Activated CD4-positive, alpha-beta T cell treated with anti-CD3 and anti-CD28 coated beads for 36 hours (primary cell): ENCODE measurements at regions of chr5 and their contacts with region 1.

Region 1: DNA sequence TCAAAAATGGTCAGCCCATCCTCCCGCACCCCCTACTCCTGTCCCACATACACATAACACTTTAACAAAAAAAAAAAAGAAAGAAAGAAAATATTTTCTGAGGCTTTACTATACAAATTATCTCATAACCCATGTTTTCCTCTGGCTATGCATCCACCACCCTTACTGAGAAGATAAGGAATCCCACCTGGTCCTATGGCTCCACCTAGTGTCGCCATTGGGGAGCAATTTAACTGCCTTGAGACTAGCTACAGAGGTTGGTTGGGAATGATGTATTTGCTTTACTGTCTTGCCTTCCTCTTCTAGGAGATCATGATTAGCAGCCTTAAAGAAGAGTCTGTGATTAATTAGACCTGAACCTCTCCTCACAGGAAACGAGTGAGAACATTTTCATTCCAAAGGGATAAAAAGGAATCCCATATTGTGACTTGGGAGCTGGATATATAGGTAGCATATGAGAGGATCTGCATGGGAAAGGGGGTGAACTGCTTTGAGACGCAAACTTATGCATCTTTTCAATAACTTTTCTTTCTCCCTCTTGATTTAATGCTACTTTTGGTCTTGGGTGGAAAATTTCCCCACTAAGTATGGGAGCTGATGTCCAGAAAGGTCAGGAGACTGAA is 77.7 kb upstream of the SELENOP start:
- DNase-seq: peak; percentile 82
- ATAC-seq: peak; percentile 84
- H3K4me3 Mint-ChIP-seq: no peak overlapping the region
- H3K27ac Mint-ChIP-seq: no peak overlapping the region
- H3K4me1 Mint-ChIP-seq: no peaks in the 10 kb centered on the region
- H3K27me3 Mint-ChIP-seq: peaks cover 3% of the 10 kb centered on the region

Region 2: DNA sequence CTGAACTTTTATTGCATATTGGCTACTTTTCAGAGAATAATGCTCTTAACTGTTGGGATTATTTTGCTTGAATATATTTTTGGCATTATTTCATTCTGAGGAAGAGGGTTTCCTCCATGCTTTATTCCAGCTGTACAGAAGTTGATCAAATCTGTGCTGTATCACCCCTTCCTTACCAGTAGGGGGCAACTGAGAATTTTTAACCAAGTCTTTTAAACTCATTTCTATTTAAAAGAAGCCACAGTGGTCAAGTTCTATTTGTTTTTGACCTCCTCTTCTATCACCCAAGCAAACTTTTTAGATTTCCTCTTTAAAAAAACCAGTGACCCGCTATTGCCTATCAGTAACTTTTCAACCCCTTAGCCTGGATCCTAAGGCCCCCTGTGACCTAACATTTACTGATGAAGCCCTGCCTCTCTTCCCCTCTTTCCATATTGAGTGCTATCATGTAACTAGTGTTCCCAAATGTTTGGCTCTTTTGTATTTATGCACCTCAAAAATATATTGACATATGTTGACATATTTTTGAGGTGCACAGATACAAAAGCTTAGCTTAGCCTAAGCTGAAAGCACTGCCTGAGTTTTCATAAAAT is 883.8 kb before region 1 on chr5:
- CTCF ChIA-PET with region 1: no interaction called
- POLR2A ChIA-PET with region 1: no interaction called
- intact Hi-C with region 1: loop called in 1 of 2 experiments (anchors 2 kb)
- DNase-seq: no peak
- ATAC-seq: no peak
- H3K4me3 Mint-ChIP-seq: no peak overlapping the region
- H3K27ac Mint-ChIP-seq: no peak overlapping the region
- H3K4me1 Mint-ChIP-seq: no peaks in the 10 kb centered on the region
- H3K27me3 Mint-ChIP-seq: peaks cover 3% of the 10 kb centered on the region

Region 3: DNA sequence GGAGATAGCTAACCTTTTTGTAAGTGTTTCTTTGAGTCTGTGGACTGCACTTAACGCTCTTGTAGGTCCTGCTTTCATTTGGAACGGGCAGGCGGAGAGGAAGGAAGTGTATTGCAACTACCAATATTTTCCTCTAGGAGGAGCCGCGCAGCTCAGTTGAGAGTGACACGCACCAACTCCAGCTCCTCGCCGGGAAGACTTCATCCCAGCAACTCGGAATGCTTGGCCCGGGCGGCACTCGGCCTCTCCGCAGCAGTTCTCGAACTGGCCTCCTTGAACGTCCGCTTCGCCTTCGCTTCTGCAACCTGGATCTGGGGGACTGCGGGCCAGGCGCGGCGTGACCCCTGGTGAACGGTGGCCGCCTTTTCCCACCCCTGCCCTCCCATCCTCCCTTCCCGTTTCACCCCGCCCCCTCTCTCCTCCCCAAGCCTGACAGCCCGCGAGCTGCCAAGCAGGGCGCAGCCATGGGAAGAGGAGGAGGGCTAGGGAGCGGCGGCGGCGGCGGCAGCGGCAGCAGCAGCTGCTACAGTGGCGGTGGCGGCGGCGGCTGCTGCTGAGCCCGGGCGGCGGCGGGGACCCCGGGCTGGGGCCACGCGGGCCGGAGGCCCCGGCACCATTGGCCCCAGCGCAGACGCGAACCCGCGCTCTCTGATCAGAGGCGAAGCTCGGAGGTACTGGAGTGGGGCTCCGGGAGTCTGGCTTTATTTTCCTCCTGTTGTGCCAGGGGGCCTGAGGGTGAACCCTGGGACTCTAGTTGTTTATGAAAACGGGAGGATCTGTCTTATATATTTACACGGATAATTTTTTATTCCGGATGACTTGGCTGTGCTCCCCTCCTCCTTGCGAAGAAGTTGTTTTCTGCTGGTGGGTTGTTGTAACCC is 465.9 kb before region 1 on chr5 and contains the start of gene GHR:
- CTCF ChIA-PET with region 1: no interaction called
- POLR2A ChIA-PET with region 1: no interaction called
- intact Hi-C with region 1: loop called (anchors 1 to 5 kb)
- DNase-seq: peak; percentile 54
- ATAC-seq: peak; percentile 73
- H3K4me3 Mint-ChIP-seq: no peak within 1 kb of the TSS
- H3K27ac Mint-ChIP-seq: no peak within 1 kb of the TSS
- H3K4me1 Mint-ChIP-seq: no peaks in the 10 kb centered on the region
- H3K27me3 Mint-ChIP-seq: peaks cover 24% of the 10 kb centered on the region
- total RNA-seq, gene GHR: not detected

Region 4: DNA sequence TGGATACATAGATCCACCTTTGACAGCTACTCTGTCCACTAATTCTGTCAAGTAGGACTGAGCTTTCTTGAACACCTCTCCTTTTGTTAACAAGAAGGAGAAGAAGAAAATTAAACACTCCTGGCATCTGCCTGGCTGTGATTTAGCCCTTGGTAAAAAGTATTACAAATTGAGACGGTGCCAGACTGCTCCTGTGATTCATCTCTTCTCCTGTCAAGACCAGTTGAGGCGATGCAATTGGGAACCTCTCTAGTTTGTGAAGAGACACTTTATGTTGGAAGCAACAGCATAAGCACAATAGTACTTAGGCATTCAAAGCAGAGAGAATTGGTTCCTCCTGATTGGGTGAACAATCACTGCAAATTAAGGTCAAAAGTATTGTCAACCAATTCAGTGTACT is 393.5 kb before region 1 on chr5:
- CTCF ChIA-PET with region 1: no interaction called
- POLR2A ChIA-PET with region 1: no interaction called
- intact Hi-C with region 1: no loop called
- DNase-seq: no peak
- ATAC-seq: no peak
- H3K4me3 Mint-ChIP-seq: no peak overlapping the region
- H3K27ac Mint-ChIP-seq: no peak overlapping the region
- H3K4me1 Mint-ChIP-seq: no peaks in the 10 kb centered on the region
- H3K27me3 Mint-ChIP-seq: no peaks in the 10 kb centered on the region

Region 5: GRCh38 chr5:42583322-42583721 is 306.1 kb before region 1 on chr5:
- CTCF ChIA-PET with region 1: no interaction called
- POLR2A ChIA-PET with region 1: no interaction called
- intact Hi-C with region 1: loop called in 1 of 2 experiments (anchors 5 kb)
- DNase-seq: peak; percentile 52
- ATAC-seq: no peak
- H3K4me3 Mint-ChIP-seq: no peak overlapping the region
- H3K27ac Mint-ChIP-seq: no peak overlapping the region
- H3K4me1 Mint-ChIP-seq: no peaks in the 10 kb centered on the region
- H3K27me3 Mint-ChIP-seq: peaks cover 10% of the 10 kb centered on the region

Region 6: DNA sequence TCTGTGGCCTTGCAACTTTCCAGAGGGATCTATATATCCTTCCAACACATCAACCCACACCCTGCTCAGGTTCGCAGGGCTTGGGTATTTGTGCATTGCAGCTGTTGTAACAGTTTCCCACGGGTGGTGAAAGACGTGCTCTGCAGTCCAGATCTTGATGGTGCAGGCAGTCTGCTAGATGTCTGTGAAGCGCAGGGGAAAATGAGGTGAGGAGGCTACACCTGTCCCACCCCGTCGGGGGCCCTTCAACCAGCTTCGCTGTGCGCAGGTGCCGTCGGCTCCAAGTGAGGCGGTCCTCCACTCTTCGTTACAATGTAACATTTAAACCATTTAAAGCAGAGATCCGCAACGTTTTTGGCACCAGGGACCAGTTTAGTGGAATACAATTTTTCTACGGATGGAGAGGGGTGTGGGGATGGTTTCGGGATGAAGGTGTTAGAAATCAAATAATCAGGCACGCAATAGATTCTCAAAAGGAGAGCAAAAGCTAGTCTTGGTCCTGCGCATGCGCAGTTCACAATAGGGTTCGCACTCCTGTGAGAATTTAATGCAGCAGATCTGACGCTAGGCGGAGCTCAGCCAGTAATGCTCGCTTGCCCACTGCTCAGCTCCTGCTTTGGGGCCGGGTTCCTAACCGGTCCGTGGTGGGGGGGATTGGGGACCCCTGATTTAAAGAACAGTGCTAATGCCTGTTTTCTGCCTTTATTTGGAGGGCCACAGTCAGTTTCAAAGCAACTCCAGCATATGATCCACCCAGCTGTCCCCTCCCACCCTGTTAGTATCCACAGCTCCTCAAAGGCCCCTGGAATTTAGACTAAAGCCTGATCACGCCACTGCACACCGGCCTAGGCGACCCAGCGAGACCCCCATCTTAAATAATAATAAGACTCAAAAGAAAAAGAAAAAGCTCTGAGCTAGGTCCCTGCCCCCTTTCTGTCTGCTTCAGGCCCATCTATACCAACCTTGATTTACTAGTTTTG is 19.4 kb after region 1 on chr5:
- CTCF ChIA-PET with region 1: interaction called, 16 read pairs
- POLR2A ChIA-PET with region 1: no interaction called
- intact Hi-C with region 1: no loop called
- DNase-seq: peak; percentile 95
- ATAC-seq: peak; percentile 95
- H3K4me3 Mint-ChIP-seq: peak overlapping the region; percentile 75
- H3K27ac Mint-ChIP-seq: peak overlapping the region; percentile 48
- H3K4me1 Mint-ChIP-seq: peaks cover 14% of the 10 kb centered on the region
- H3K27me3 Mint-ChIP-seq: peaks cover 8% of the 10 kb centered on the region

Region 7: GRCh38 chr5:43140286-43140685 is 250.9 kb after region 1 on chr5:
- CTCF ChIA-PET with region 1: no interaction called
- POLR2A ChIA-PET with region 1: no interaction called
- intact Hi-C with region 1: no loop called
- DNase-seq: no peak
- ATAC-seq: peak; percentile 89
- H3K4me3 Mint-ChIP-seq: no peak overlapping the region
- H3K27ac Mint-ChIP-seq: peak overlapping the region; percentile 31
- H3K4me1 Mint-ChIP-seq: peaks cover 42% of the 10 kb centered on the region
- H3K27me3 Mint-ChIP-seq: no peaks in the 10 kb centered on the region